H1 (cell line): ENCODE measurements at regions of chr6 and their contacts with region 1.

Region 1: DNA sequence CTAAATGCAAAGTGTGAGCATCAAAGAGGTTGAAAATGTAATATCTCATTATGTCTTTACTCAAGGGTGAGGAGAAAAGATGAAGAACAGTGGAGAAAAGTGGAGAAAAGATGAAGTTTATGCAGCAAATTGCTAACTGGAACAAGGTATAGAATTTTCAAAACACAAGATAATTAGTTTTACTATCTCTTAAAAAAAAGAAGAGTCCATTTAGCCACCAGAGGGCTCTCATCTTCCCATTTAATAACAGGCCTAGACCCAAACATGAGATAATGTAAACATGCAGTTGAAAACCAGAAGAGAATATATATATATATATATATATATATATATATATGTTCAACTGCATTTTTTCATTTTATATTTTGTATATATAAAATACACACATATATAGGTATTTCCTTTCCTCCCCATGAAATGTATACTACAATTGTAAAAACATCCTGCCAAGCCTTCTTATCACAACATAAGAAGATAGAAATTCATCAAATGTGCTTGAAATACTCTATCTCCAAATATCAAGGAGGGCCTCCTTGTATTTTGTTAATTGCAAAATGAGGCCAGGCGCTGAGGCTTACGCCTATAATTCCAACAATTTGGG is 78.4 kb downstream of the ADTRP start:
- DNase-seq: no peak
- H3K4me3 ChIP-seq: no peak overlapping the region
- H3K27ac ChIP-seq: no peak overlapping the region
- H3K4me1 ChIP-seq: no peaks in the 10 kb centered on the region
- H3K27me3 ChIP-seq: no peaks in the 10 kb centered on the region
- CTCF ChIP-seq: peak in 1 of 3 experiments; percentile 30; a peak in 2 of 4 replicates
- EP300 ChIP-seq: no peak
- POLR2A ChIP-seq: no peak
- RAD21 ChIP-seq: peak; percentile 46 to 52

Region 2: DNA sequence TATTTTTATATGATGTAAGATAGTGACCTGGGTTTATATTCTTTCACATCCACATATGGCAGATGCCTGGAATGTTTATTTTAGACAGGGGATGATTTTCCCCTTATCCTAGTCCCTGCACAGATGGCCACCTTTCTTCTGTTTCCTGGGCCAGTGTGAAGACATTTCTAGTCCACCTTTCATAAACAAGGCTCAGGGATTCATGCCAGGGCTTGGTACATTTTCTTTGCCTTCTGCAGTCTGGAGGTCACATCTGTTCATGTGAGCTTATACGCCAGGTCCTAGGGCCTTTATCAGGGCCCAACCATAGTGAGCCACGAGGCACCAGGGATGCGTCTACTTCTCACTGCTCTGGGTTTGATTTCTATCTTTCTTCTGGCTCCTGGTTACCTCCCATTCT is 550.7 kb before region 1 on chr6:
- CTCF ChIA-PET with region 1: no interaction called
- POLR2A ChIA-PET with region 1: no interaction called
- DNase-seq: no peak
- H3K4me3 ChIP-seq: no peak overlapping the region
- H3K27ac ChIP-seq: no peak overlapping the region
- H3K4me1 ChIP-seq: peaks cover 0 to 7% (median 5%) of the 10 kb centered on the region in 4 experiments; a peak in 3 of 7 replicates
- H3K27me3 ChIP-seq: no peaks in the 10 kb centered on the region
- CTCF ChIP-seq: no peak
- EP300 ChIP-seq: no peak
- POLR2A ChIP-seq: no peak
- RAD21 ChIP-seq: no peak

Region 3: GRCh38 chr6:11688425-11688709 is 11.9 kb before region 1 on chr6:
- CTCF ChIA-PET with region 1: interaction called, 11 read pairs
- POLR2A ChIA-PET with region 1: no interaction called
- DNase-seq: no peak
- H3K4me3 ChIP-seq: no peak overlapping the region
- H3K27ac ChIP-seq: no peak overlapping the region
- H3K4me1 ChIP-seq: peaks cover 0 to 12% (median 2%) of the 10 kb centered on the region in 4 experiments; a peak in 4 of 7 replicates
- H3K27me3 ChIP-seq: no peaks in the 10 kb centered on the region
- CTCF ChIP-seq: no peak
- EP300 ChIP-seq: no peak
- POLR2A ChIP-seq: no peak
- RAD21 ChIP-seq: no peak